Activated CD4-positive, alpha-beta T cell treated with anti-CD3 and anti-CD28 coated beads for 36 hours (primary cell): ENCODE measurements at regions of chr15 and their contacts with region 1.

Region 1: GRCh38 chr15:43510200-43511011 is 7.0 kb upstream of the MAP1A start:
- DNase-seq: peak; percentile 98
- ATAC-seq: peak; percentile 95
- H3K4me3 Mint-ChIP-seq: peak overlapping the region; percentile 91
- H3K27ac Mint-ChIP-seq: peak overlapping the region; percentile 90
- H3K4me1 Mint-ChIP-seq: peaks cover 32% of the 10 kb centered on the region
- H3K27me3 Mint-ChIP-seq: no peaks in the 10 kb centered on the region

Region 2: DNA sequence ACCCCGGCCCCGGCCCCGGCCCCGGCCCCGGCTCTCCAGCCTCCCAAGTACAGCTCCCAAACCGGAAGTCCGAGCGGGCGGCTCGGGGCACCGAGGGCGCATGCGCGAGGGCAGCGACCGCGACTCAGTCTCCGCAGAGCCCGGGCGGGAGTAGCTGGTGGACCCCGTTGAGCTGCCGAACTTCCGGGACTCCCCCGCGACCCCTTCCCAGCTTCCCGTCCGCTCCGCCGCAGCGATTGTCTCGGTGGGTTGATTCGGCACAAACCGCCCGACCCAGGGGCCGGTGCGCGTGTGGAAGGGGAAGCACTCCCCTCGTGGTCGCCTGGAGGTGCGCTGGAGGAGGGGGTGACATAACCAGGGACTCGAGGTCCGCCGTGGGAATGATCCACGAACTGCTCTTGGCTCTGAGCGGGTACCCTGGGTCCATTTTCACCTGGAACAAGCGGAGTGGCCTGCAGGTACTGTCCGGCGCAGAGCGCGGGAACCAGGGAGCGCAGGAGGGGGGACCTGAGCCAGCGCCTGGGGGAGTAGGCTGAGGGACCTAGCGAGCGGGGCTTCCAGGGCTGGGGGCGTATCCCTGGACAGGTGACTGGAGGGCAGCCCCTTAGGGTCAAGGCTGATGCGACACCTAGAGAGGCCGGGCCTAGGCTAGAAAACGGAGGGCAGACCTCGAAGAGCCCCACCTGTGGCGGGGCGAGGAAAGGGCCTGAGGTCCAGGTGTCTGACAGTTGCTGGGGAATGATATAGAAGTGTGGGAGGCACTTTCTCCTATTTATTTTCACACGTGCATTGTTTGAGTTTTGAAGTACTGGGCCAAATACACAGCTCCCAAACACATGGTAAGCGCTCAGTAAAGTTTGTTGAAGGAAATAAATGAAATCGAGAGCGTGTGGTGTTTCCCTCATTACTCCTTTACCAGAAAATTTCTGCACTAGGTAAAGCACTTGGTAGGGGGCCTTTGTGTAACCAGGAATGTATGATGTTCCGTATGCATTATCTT is 139.1 kb before region 1 on chr15 and contains the starts of genes TUBGCP4 and ZSCAN29:
- CTCF ChIA-PET with region 1: interaction called, 5 read pairs
- POLR2A ChIA-PET with region 1: no interaction called
- intact Hi-C with region 1: loop called in 1 of 2 experiments (anchors 1 kb)
- DNase-seq: peak; percentile 87
- ATAC-seq: peak; percentile 86
- H3K4me3 Mint-ChIP-seq: peak within 1 kb of the TSS; percentile 86
- H3K27ac Mint-ChIP-seq: peak within 1 kb of the TSS; percentile 85
- H3K4me1 Mint-ChIP-seq: peaks cover 46% of the 10 kb centered on the region
- H3K27me3 Mint-ChIP-seq: no peaks in the 10 kb centered on the region
- total RNA-seq, gene TUBGCP4: 43.6 to 44.0 TPM
- total RNA-seq, gene ZSCAN29: 20.8 to 26.4 TPM

Region 3: GRCh38 chr15:43483306-43484128 is 26.9 kb before region 1 on chr15:
- CTCF ChIA-PET with region 1: interaction called, 6 read pairs
- POLR2A ChIA-PET with region 1: interaction called, 7 read pairs
- intact Hi-C with region 1: loop called in 1 of 2 experiments (anchors 5 kb)
- DNase-seq: no peak
- ATAC-seq: no peak
- H3K4me3 Mint-ChIP-seq: no peak overlapping the region
- H3K27ac Mint-ChIP-seq: no peak overlapping the region
- H3K4me1 Mint-ChIP-seq: peaks cover 4% of the 10 kb centered on the region
- H3K27me3 Mint-ChIP-seq: no peaks in the 10 kb centered on the region

Region 4: GRCh38 chr15:43776718-43777583 is 266.5 kb after region 1 on chr15 and contains the start of gene ELL3:
- CTCF ChIA-PET with region 1: no interaction called
- POLR2A ChIA-PET with region 1: no interaction called
- intact Hi-C with region 1: loop called (anchors 1 to 10 kb)
- DNase-seq: peak; percentile 94
- ATAC-seq: peak; percentile 84
- H3K4me3 Mint-ChIP-seq: peak within 1 kb of the TSS; percentile 78
- H3K27ac Mint-ChIP-seq: peak within 1 kb of the TSS; percentile 92
- H3K4me1 Mint-ChIP-seq: peaks cover 19% of the 10 kb centered on the region
- H3K27me3 Mint-ChIP-seq: no peaks in the 10 kb centered on the region
- total RNA-seq, gene ELL3: 3.6 TPM